ENCODE measurements at regions of chr9 and their contacts with region 1.

Region 1: GRCh38 chr9:33942471-33943083 is 106.1 kb downstream of the UBAP2 start:
- DNase-seq: no peak
- H3K4me3 ChIP-seq: no peak overlapping the region
- H3K27ac ChIP-seq: no peak overlapping the region
- H3K4me1 ChIP-seq: peaks cover 0 to 35% (median 10%) of the 10 kb centered on the region in 4 donors
- H3K27me3 ChIP-seq: no peaks in the 10 kb centered on the region
- CTCF ChIP-seq: no peak

Region 2: DNA sequence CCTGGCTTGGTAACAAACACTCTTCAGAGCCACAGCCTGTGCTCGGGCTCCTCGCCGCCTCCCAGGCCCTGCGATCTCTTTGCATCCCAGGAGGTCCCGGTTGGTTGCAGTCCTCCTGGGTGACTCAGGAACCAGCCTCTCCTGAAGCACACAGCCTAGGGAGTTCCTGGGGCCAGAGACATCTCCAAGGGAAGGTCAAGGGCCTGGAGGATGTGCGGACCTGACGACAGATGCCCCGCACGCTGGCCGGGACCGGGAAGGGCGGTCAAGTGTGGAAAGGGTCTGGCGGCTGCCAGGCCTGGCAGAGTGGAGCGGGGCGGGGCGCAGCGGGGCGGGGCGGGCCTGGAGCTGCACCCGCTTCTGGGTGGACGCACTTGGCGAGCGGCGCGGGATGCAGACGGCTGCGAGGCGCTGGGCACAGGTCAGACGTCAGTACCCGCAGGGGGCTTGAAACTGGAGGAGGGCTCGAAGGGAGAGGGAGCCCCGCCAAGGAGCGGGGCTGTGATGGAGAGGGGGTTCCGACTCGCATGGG is 192.2 kb before region 1 on chr9:
- intact Hi-C with region 1: no loop called
- DNase-seq: no peak
- H3K4me3 ChIP-seq: peak overlapping the region in 1 of 2 donors; percentile 12
- H3K27ac ChIP-seq: no peak overlapping the region
- H3K4me1 ChIP-seq: peaks cover 0 to 10% (median 7%) of the 10 kb centered on the region in 4 donors
- H3K27me3 ChIP-seq: peaks cover 0 to 39% of the 10 kb centered on the region in 2 donors
- CTCF ChIP-seq: no peak

Region 3: GRCh38 chr9:33867747-33868439 is 74.7 kb before region 1 on chr9:
- intact Hi-C with region 1: loop called (anchors 10 kb)
- DNase-seq: peak; percentile 80 to 86
- H3K4me3 ChIP-seq: peak overlapping the region in 1 of 2 donors; percentile 14
- H3K27ac ChIP-seq: peak overlapping the region; percentile 50 to 65
- H3K4me1 ChIP-seq: peaks cover 0 to 27% (median 26%) of the 10 kb centered on the region in 4 donors
- H3K27me3 ChIP-seq: no peaks in the 10 kb centered on the region
- CTCF ChIP-seq: no peak

Region 4: DNA sequence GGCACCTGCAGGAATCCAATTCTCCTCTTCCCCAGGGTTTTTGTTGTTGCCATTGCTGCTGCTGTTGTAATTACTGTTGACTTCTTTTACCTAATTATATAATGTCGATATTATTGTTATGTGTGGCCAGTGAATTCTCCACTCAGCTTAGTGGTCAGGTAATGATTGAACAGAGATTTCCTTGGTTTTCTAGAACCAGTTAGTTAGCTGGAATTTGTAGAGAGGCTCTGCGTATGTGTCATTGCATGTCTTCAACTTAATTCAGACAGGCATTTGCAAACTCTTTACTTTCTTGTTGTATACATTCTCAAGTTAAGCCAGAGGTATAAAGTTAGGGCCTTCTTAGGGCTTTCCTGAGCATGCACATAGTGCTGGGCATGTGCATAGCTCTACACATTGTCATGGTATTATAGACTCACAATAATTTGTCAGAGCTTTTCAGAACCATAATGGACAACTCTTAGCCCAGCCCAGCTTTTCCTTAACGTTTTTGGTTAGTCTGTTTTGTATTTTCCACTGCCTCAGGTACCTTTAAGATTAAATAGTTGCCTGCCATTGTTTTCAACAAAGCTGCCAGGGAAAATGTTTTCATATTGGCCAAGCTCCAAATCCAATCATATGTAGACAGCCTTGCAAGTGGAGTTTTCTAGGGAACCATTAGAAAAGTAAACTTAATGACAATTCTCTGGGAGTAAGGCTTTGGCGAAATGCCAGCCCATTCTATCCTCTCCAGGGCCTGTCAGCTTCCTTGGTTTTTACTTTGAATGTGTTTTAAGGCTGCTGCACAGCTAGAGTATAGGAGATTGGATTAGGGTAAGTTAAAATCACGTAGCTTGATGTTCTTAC is 57.5 kb before region 1 on chr9:
- intact Hi-C with region 1: no loop called
- DNase-seq: no peak
- H3K4me3 ChIP-seq: no peak overlapping the region
- H3K27ac ChIP-seq: no peak overlapping the region
- H3K4me1 ChIP-seq: peaks cover 0 to 42% (median 18%) of the 10 kb centered on the region in 4 donors
- H3K27me3 ChIP-seq: no peaks in the 10 kb centered on the region
- CTCF ChIP-seq: no peak

Region 5: GRCh38 chr9:34010979-34011378 is 68.4 kb after region 1 on chr9:
- intact Hi-C with region 1: no loop called
- DNase-seq: no peak
- H3K4me3 ChIP-seq: no peak overlapping the region
- H3K27ac ChIP-seq: no peak overlapping the region
- H3K4me1 ChIP-seq: no peaks in the 10 kb centered on the region
- H3K27me3 ChIP-seq: no peaks in the 10 kb centered on the region
- CTCF ChIP-seq: no peak

Region 6: GRCh38 chr9:34233672-34234071 is 291.1 kb after region 1 on chr9:
- intact Hi-C with region 1: no loop called
- DNase-seq: no peak
- H3K4me3 ChIP-seq: no peak overlapping the region
- H3K27ac ChIP-seq: no peak overlapping the region
- H3K4me1 ChIP-seq: no peaks in the 10 kb centered on the region
- H3K27me3 ChIP-seq: no peaks in the 10 kb centered on the region
- CTCF ChIP-seq: no peak